ENCODE measurements at regions of chrX and their contacts with region 1.

Region 1: DNA sequence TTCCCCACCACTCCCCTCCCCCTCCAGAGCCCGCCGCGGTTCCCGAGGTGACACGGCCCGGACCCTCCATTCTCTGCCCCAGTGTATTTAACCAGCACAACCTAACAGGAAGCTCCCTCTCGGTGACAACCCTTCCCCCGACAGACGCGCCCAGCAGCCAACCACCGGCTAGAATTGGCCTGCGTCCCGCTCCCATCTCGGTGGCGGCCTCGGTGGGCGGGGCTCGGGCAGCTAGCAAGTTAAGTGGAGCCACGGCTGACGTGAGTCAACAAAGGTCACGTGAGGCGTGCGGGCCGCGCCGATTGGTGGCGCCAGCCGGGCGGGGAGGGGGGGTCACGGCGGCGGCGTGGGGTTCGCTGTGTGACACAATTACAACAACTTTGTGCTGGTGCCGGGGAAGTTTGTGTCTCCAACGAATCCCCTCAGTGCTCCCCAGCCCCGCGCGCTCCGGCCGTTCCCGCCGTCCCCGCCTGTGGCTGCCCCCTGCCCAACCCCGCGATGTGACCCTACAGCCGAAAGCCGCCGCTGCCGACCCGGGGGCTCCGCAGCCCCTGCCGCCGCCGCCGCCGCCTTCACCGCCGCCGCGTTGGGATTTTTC is at the start of gene KDM6A:
- DNase-seq: peak; percentile 85 to 99 (median 98)
- ATAC-seq: peak; percentile 94
- H3K4me3 ChIP-seq: peak within 1 kb of the TSS; percentile 89
- H3K4me3 Mint-ChIP-seq: peak within 1 kb of the TSS; percentile 87 to 100 (median 96)
- H3K27ac ChIP-seq: peak within 1 kb of the TSS; percentile 100
- H3K27ac Mint-ChIP-seq: peak within 1 kb of the TSS; percentile 90 to 100 (median 97)
- H3K4me1 ChIP-seq: peaks cover 14 to 15% of the 10 kb centered on the region in 2 donors
- H3K4me1 Mint-ChIP-seq: peaks cover 0 to 46% (median 27%) of the 10 kb centered on the region in 7 donors
- H3K27me3 ChIP-seq: no peaks in the 10 kb centered on the region
- H3K27me3 Mint-ChIP-seq: no peaks in the 10 kb centered on the region
- total RNA-seq, gene KDM6A: 27.8 to 55.6 (median 47.5) TPM

Region 2: GRCh38 chrX:44253575-44253942 is 619.4 kb before region 1 on chrX:
- CTCF ChIA-PET with region 1: no interaction called
- POLR2A ChIA-PET with region 1: no interaction called
- intact Hi-C with region 1: loop called in 1 of 2 experiments (anchors 2 kb)
- DNase-seq: no peak
- ATAC-seq: no peak
- H3K4me3 ChIP-seq: peak overlapping the region; percentile 14
- H3K4me3 Mint-ChIP-seq: peak overlapping the region; percentile 59 to 84 (median 72)
- H3K27ac ChIP-seq: peak overlapping the region; percentile 56
- H3K27ac Mint-ChIP-seq: peak overlapping the region; percentile 80 to 97 (median 91)
- H3K4me1 ChIP-seq: peaks cover 7 to 12% of the 10 kb centered on the region in 2 donors
- H3K4me1 Mint-ChIP-seq: peaks cover 15 to 64% (median 33%) of the 10 kb centered on the region in 7 donors
- H3K27me3 ChIP-seq: no peaks in the 10 kb centered on the region
- H3K27me3 Mint-ChIP-seq: no peaks in the 10 kb centered on the region

Region 3: GRCh38 chrX:44914532-44915198 is 41.7 kb after region 1 on chrX:
- CTCF ChIA-PET with region 1: no interaction called
- POLR2A ChIA-PET with region 1: no interaction called
- intact Hi-C with region 1: loop called in 1 of 2 experiments (anchors 5 kb)
- DNase-seq: no peak
- ATAC-seq: no peak
- H3K4me3 ChIP-seq: no peak overlapping the region
- H3K4me3 Mint-ChIP-seq: peak overlapping the region in 6 of 10 donors; percentile 12 to 66 (median 48)
- H3K27ac ChIP-seq: no peak overlapping the region
- H3K27ac Mint-ChIP-seq: peak overlapping the region in 2 of 9 donors; percentile 12 to 66
- H3K4me1 ChIP-seq: peaks cover 0 to 4% of the 10 kb centered on the region in 2 donors
- H3K4me1 Mint-ChIP-seq: peaks cover 12 to 72% (median 55%) of the 10 kb centered on the region in 7 donors
- H3K27me3 ChIP-seq: no peaks in the 10 kb centered on the region
- H3K27me3 Mint-ChIP-seq: no peaks in the 10 kb centered on the region

Region 4: DNA sequence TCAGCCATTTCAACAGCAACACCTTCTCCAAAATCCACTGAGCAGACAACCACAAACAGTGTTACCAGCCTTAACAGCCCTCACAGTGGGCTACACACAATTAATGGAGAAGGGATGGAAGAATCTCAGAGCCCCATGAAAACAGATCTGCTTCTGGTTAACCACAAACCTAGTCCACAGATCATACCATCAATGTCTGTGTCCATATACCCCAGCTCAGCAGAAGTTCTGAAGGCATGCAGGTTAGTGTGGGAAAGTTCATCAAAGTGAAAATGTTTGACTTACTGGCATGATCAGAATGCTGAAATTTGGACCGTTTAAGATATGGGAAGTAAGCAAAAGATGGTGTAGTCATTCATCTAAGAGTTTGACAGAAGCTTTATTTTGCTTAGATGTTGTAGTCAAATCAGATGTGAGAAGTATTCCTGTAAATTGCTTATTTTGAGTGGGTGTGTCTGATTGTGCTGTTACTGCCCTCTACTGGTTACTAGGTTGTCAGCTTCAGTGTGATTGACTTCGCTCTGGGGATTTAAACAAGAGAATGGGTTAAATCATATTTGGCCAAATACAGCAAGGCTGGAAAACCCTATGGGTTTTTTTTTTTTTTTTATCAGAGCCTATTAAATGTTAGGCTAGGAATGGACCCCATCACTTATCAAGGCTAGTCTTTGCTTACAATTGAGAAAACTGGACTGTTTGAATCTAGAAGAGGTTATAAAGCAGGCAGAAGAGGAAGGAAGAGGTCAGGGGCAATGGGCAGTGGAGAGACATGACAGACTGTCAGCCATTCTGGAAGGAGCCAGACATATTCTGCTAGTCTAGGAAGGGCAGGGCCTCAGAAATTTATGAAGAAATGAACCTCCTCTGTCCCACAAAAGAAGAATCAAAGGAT is 197.4 kb after region 1 on chrX:
- CTCF ChIA-PET with region 1: no interaction called
- POLR2A ChIA-PET with region 1: interaction called, 3 read pairs
- intact Hi-C with region 1: loop called (anchors 1 kb)
- DNase-seq: peak in 7 of 9 donors; percentile 9 to 59 (median 47)
- ATAC-seq: peak; percentile 74
- H3K4me3 ChIP-seq: no peak overlapping the region
- H3K4me3 Mint-ChIP-seq: peak overlapping the region in 7 of 10 donors; percentile 7 to 50 (median 17)
- H3K27ac ChIP-seq: peak overlapping the region; percentile 36
- H3K27ac Mint-ChIP-seq: peak overlapping the region; percentile 61 to 88 (median 74)
- H3K4me1 ChIP-seq: peaks cover 0 to 4% of the 10 kb centered on the region in 2 donors
- H3K4me1 Mint-ChIP-seq: peaks cover 30 to 87% (median 67%) of the 10 kb centered on the region in 7 donors
- H3K27me3 ChIP-seq: no peaks in the 10 kb centered on the region
- H3K27me3 Mint-ChIP-seq: no peaks in the 10 kb centered on the region

Region 5: GRCh38 chrX:45186643-45187026 is 313.7 kb after region 1 on chrX:
- CTCF ChIA-PET with region 1: no interaction called
- POLR2A ChIA-PET with region 1: interaction called, 3 read pairs
- intact Hi-C with region 1: loop called in 1 of 2 experiments (anchors 5 kb)
- DNase-seq: peak in 2 of 9 donors; percentile 3 to 7
- ATAC-seq: no peak
- H3K4me3 ChIP-seq: peak overlapping the region; percentile 65
- H3K4me3 Mint-ChIP-seq: peak overlapping the region; percentile 79 to 91 (median 87)
- H3K27ac ChIP-seq: no peak overlapping the region
- H3K27ac Mint-ChIP-seq: peak overlapping the region in 6 of 9 donors; percentile 11 to 86 (median 78)
- H3K4me1 ChIP-seq: peaks cover 0 to 1% of the 10 kb centered on the region in 2 donors
- H3K4me1 Mint-ChIP-seq: peaks cover 12 to 32% (median 27%) of the 10 kb centered on the region in 7 donors
- H3K27me3 ChIP-seq: no peaks in the 10 kb centered on the region
- H3K27me3 Mint-ChIP-seq: no peaks in the 10 kb centered on the region

Region 6: GRCh38 chrX:46573331-46573891 is 1700.5 kb after region 1 on chrX and contains the start of gene CHST7:
- CTCF ChIA-PET with region 1: no interaction called
- POLR2A ChIA-PET with region 1: no interaction called
- intact Hi-C with region 1: loop called in 1 of 2 experiments (anchors 5 kb)
- DNase-seq: peak in 8 of 9 donors; percentile 15 to 60 (median 25)
- ATAC-seq: peak; percentile 69
- H3K4me3 ChIP-seq: peak within 1 kb of the TSS; percentile 61
- H3K4me3 Mint-ChIP-seq: peak within 1 kb of the TSS; percentile 51 to 84 (median 74)
- H3K27ac ChIP-seq: peak within 1 kb of the TSS; percentile 57
- H3K27ac Mint-ChIP-seq: peak within 1 kb of the TSS in 7 of 9 donors; percentile 17 to 81 (median 72)
- H3K4me1 ChIP-seq: peaks cover 3 to 17% of the 10 kb centered on the region in 2 donors
- H3K4me1 Mint-ChIP-seq: peaks cover 16 to 41% (median 35%) of the 10 kb centered on the region in 7 donors
- H3K27me3 ChIP-seq: no peaks in the 10 kb centered on the region
- H3K27me3 Mint-ChIP-seq: no peaks in the 10 kb centered on the region
- total RNA-seq, gene CHST7: 2.1 to 7.2 (median 2.3) TPM

Measured in naive thymus-derived CD4-positive, alpha-beta T cell (primary cell).